ENCODE measurements at regions of chr7 and their contacts with region 1.

Region 1: DNA sequence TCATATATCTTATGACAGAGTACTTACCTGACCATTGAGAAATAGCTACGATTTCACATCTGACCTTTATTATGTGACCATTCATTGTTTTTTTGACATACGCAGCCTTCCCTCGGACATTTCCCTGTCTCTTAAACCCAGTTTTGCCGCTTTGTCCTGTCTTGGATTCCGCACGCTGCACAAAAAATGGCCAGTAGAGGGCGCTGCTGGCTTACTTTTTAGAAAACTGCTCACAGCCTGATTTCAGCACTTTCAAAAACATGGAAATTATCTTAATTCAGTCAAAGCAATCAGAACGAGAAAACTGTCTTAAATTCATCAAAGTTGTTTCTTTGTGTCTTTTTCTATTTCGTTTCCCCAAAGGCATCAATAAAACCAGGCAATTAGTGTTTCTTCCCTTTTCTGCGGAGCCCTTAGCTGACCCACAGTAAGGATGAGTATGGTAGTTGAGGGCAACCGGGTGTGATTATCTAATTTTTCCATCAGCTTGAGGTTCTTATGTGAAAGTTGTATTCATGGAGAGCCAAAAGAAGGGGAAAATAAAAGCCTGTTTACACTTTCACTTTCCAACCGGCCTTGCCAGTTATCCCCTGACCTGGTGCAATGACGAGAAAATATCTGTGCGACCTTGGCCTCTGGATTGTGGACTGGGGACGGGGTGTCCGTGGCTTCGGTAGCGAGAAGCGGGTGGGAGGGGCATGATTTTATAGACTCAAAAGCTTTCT is 144.4 kb downstream of the DYNC1I1 start:
- DNase-seq: peak; percentile 52
- ATAC-seq: peak; percentile 34
- H3K4me3 Mint-ChIP-seq: no peak overlapping the region
- H3K27ac Mint-ChIP-seq: no peak overlapping the region
- H3K4me1 Mint-ChIP-seq: no peaks in the 10 kb centered on the region
- H3K27me3 Mint-ChIP-seq: peaks cover 16% of the 10 kb centered on the region
- CTCF ChIP-seq: no peak

Region 2: DNA sequence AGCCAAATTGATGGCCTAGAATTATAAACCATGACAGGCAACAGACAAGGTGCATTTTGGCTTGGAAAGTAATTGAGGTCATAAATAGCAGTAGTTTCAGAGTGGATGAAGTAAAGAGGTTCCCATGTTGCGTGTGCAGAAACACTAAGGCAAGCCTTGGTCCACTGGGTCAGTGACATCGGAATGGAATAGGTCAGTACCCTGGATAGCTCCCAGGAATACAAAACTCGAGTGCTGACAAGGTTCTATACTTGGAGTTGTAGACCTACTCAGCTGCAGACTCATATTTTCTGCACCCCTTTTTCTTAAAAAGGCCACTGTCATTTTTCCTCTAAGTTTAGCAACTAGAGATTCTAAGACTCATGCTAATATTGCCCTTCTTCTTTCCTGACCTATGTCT is 11.6 kb before region 1 on chr7:
- CTCF ChIA-PET with region 1: interaction called, 18 read pairs
- POLR2A ChIA-PET with region 1: no interaction called
- intact Hi-C with region 1: no loop called
- DNase-seq: no peak
- ATAC-seq: no peak
- H3K4me3 Mint-ChIP-seq: no peak overlapping the region
- H3K27ac Mint-ChIP-seq: no peak overlapping the region
- H3K4me1 Mint-ChIP-seq: no peaks in the 10 kb centered on the region
- H3K27me3 Mint-ChIP-seq: peaks cover 5% of the 10 kb centered on the region
- CTCF ChIP-seq: no peak

Region 3: GRCh38 chr7:97027427-97028234 is 1110.9 kb after region 1 on chr7:
- CTCF ChIA-PET with region 1: interaction called, 38 read pairs
- POLR2A ChIA-PET with region 1: no interaction called
- intact Hi-C with region 1: loop called (anchors 1 kb)
- DNase-seq: no peak
- ATAC-seq: peak; percentile 71
- H3K4me3 Mint-ChIP-seq: peak overlapping the region; percentile 75
- H3K27ac Mint-ChIP-seq: no peak overlapping the region
- H3K4me1 Mint-ChIP-seq: peaks cover 23% of the 10 kb centered on the region
- H3K27me3 Mint-ChIP-seq: peaks cover 73% of the 10 kb centered on the region
- CTCF ChIP-seq: no peak

Region 4: GRCh38 chr7:97179454-97180104 is 1262.8 kb after region 1 on chr7:
- CTCF ChIA-PET with region 1: no interaction called
- POLR2A ChIA-PET with region 1: no interaction called
- intact Hi-C with region 1: loop called (anchors 2 kb)
- DNase-seq: no peak
- ATAC-seq: peak; percentile 79
- H3K4me3 Mint-ChIP-seq: no peak overlapping the region
- H3K27ac Mint-ChIP-seq: no peak overlapping the region
- H3K4me1 Mint-ChIP-seq: peaks cover 6% of the 10 kb centered on the region
- H3K27me3 Mint-ChIP-seq: no peaks in the 10 kb centered on the region
- CTCF ChIP-seq: peak; percentile 63

Region 5: DNA sequence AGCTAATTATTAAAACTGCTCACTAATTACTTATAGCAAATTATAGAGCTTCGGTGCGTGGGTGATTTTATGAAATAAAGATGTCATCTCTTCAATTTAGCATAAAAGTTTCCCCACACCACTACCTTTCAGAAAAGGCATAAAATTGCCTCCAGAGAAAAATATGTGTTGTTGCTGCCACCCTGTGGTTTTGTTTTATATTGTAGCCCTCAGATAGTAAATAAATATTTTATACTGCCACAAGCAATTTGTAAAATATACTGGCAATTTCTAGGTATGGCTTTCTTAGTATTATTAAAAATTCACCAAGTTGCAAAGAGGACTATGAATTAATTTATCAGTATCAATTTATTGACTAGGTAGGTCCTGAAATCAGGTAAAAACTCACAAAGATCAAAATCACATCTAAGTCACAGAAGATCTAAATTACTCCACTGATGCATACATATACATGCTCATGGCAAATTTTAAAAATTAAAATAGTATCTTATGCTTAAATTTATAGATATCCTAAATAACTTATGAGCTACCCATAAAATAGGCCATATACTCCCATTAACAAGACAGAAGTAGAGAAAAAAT is 1929.0 kb after region 1 on chr7:
- CTCF ChIA-PET with region 1: no interaction called
- POLR2A ChIA-PET with region 1: no interaction called
- intact Hi-C with region 1: loop called (anchors 2 kb)
- DNase-seq: no peak
- ATAC-seq: no peak
- H3K4me3 Mint-ChIP-seq: no peak overlapping the region
- H3K27ac Mint-ChIP-seq: no peak overlapping the region
- H3K4me1 Mint-ChIP-seq: no peaks in the 10 kb centered on the region
- H3K27me3 Mint-ChIP-seq: no peaks in the 10 kb centered on the region
- CTCF ChIP-seq: no peak